ENCODE measurements at regions of chr2 and their contacts with region 1.

Region 1: DNA sequence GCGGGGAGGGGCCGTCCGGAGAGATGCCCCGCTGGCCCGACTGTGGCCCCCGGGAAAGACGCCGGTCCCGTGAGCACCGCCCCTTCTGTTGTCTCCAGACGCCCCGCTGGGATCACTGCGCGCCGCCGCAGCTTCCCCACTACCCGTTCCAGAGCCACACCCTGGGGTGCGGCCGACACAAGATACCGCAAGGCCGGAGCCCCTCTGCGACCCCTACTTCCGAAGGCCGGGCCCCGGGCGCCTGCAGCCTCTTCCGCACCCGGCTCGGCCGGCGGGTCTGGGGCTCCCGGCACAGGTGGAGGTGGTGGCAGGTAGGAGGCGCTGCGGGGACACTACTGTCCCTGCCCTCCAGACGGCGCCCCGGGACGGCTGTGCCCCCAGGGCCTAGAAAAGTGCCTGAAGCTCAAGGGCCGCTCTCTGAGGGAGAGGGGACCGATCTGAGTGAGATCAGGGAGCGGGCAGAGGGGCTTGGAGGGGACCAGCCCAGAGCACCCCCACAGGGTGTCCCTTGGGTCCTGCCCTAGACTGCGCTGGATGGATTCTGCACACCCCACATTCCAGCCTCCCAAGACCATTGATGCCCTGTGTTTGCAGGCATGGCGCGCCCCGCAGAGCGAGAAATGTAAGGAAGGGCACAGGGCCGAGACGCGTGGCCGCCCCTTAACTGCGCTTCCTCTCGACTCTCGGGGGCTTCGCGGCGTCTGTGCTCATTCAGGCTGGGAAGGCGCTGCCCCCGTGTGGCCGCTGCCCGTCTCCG is 80.0 kb downstream of the GFPT1 start:
- DNase-seq: peak; percentile 49 to 62
- ATAC-seq: peak; percentile 52 to 79
- H3K4me3 ChIP-seq: peak overlapping the region; percentile 57 to 62 (median 58)
- H3K27ac ChIP-seq: peak overlapping the region; percentile 14 to 65 (median 48)
- H3K4me1 ChIP-seq: peaks cover 12 to 23% of the 10 kb centered on the region in 2 donors
- H3K27me3 ChIP-seq: peaks cover 18 to 33% (median 25%) of the 10 kb centered on the region in 3 donors
- CTCF ChIP-seq: peak; percentile 70 to 85 (median 74)
- POLR2A ChIP-seq: no peak

Region 2: DNA sequence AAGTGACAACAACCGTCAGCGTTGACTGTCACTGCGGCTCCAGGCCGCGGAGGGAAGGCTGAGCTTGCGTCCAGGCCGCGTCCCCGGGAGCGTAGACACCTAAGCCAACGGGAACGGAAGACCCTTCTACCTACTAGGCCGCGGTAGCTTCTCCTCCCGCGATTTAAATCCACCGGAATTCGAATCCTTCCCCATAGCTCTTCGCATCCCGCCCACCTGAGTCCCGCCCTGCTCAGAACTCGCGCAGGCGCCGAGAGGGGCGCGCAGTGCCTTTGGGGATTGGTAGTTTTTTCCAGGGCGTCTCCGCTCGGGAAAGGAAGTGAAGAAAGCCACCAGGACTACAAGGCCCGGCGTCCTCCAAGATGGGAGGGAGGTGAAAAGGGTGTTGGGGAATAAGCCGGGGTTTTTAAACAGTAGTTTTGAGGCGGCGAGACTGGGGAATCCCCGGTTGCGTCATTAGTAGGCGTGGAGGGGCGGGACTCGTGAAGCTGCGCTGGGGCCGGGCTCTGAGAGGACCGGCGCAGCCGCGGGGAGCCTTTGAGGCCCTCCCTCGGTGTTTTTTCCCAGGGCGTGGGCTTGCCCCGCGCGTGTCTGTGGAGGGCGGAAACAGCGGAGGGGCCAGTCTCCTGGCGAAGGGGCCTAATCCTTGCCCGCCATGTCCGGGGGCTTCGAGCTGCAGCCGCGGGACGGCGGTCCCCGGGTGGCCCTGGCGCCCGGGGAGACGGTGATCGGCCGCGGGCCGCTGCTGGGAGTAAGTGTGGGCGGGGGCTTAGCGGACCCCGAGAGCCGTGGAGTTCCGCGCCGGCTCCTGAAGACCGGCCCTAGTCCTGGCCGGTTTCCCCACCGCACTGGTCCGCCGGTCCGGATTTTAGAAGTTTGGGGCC is 839.7 kb before region 1 on chr2 and contains the starts of genes APLF and FBXO48:
- in situ Hi-C with region 1: no loop called
- intact Hi-C with region 1: loop called (anchors 10 kb)
- DNase-seq: peak; percentile 97 to 98
- ATAC-seq: peak; percentile 99
- H3K4me3 ChIP-seq: peak within 1 kb of the TSS; percentile 75 to 93 (median 83)
- H3K27ac ChIP-seq: peak within 1 kb of the TSS; percentile 80 to 89 (median 87)
- H3K4me1 ChIP-seq: peaks cover 20 to 21% of the 10 kb centered on the region in 2 donors
- H3K27me3 ChIP-seq: no peaks in the 10 kb centered on the region
- CTCF ChIP-seq: no peak
- POLR2A ChIP-seq: peak; percentile 47 to 77
- total RNA-seq, gene APLF: 2.3 to 4.8 (median 3.5) TPM
- total RNA-seq, gene FBXO48: 1.1 to 1.9 (median 1.5) TPM

Region 3: DNA sequence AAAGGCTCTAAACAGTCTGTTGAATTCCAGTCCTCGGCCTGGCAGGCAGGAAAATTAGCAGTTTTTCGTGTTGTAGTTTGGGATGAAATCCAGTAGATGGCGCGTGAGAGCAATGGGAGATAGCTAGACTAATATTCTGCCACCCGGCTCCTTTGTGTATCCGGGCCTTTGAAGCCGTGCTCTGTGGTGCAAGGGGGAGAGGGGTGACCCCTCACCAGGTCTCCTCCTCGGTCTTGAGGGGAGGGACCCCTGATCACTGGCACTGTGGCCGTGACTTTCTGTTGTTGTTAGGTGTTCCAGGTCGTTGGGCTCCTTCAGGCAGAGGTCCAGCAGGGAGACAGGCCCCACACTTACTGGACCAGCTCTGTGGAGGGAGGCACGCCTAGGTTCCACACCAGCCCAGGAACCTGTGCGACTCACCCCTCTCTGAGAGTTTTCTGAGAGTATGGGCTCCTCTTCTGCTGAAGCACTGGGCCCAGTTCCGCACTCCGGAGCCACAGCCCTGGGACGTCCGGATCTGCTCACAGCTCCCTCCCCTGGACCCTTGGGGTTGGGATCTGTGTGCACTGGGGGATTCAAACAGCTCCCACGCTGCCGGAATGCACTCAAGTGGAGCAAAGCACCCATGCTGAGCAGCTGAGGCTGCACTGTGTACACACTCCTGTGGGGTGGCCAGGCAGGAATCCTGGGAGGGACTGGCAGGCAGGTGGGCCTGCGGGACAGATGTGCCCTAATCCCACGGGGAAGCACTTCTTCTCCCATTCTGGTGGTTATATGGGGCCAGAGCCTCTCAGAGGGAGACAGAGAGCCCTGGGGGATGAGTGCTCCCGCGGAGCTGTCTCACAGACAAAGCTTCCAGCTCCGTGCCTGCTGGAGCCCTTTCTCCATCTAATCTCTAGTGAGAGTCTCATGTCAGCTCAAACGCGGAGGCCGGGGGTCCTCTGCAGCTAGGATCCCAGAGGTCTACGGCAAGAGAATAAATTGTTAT is 363.1 kb before region 1 on chr2:
- in situ Hi-C with region 1: no loop called
- intact Hi-C with region 1: loop called (anchors 5 kb)
- DNase-seq: peak in 1 of 2 donors; percentile 32
- ATAC-seq: peak; percentile 42 to 53
- H3K4me3 ChIP-seq: no peak overlapping the region
- H3K27ac ChIP-seq: no peak overlapping the region
- H3K4me1 ChIP-seq: no peaks in the 10 kb centered on the region
- H3K27me3 ChIP-seq: peaks cover 0 to 2% (median 0%) of the 10 kb centered on the region in 3 donors
- CTCF ChIP-seq: peak; percentile 42 to 80 (median 57)
- POLR2A ChIP-seq: no peak

Region 4: GRCh38 chr2:69012310-69013141 is 294.5 kb before region 1 on chr2:
- in situ Hi-C with region 1: loop called (anchors 5 to 10 kb)
- intact Hi-C with region 1: loop called (anchors 1 kb)
- DNase-seq: peak; percentile 19 to 28
- ATAC-seq: peak; percentile 67 to 81
- H3K4me3 ChIP-seq: peak overlapping the region; percentile 67 to 80 (median 74)
- H3K27ac ChIP-seq: peak overlapping the region; percentile 42 to 72 (median 57)
- H3K4me1 ChIP-seq: peaks cover 18 to 26% of the 10 kb centered on the region in 2 donors
- H3K27me3 ChIP-seq: peaks cover 6 to 25% (median 22%) of the 10 kb centered on the region in 3 donors
- CTCF ChIP-seq: peak; percentile 47 to 76 (median 74)
- POLR2A ChIP-seq: no peak

Region 5: DNA sequence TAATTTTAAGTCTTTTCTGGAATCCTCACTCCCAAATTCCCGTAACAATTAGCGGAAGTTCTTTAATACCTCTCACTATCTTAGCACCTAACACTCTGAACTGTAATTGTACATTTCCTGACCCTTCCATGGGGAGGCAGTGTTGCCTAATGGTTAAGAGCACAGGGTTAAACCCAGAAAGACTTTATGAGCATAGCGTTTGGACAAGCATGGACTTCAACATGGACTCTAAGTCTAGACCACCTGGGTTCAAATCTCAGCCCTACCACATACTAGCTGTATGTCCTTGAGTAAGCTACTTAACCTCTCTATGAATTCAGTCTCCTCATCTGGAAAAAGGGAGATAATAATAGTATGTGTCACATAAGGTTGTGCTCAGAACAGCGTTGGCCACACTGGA is 281.0 kb before region 1 on chr2:
- in situ Hi-C with region 1: no loop called
- intact Hi-C with region 1: loop called (anchors 1 kb)
- DNase-seq: no peak
- ATAC-seq: peak in 1 of 2 donors; percentile 78
- H3K4me3 ChIP-seq: no peak overlapping the region
- H3K27ac ChIP-seq: no peak overlapping the region
- H3K4me1 ChIP-seq: peaks cover 0 to 1% of the 10 kb centered on the region in 2 donors
- H3K27me3 ChIP-seq: no peaks in the 10 kb centered on the region
- CTCF ChIP-seq: peak in 4 of 5 experiments; percentile 37 to 50 (median 42)
- POLR2A ChIP-seq: no peak

Region 6: DNA sequence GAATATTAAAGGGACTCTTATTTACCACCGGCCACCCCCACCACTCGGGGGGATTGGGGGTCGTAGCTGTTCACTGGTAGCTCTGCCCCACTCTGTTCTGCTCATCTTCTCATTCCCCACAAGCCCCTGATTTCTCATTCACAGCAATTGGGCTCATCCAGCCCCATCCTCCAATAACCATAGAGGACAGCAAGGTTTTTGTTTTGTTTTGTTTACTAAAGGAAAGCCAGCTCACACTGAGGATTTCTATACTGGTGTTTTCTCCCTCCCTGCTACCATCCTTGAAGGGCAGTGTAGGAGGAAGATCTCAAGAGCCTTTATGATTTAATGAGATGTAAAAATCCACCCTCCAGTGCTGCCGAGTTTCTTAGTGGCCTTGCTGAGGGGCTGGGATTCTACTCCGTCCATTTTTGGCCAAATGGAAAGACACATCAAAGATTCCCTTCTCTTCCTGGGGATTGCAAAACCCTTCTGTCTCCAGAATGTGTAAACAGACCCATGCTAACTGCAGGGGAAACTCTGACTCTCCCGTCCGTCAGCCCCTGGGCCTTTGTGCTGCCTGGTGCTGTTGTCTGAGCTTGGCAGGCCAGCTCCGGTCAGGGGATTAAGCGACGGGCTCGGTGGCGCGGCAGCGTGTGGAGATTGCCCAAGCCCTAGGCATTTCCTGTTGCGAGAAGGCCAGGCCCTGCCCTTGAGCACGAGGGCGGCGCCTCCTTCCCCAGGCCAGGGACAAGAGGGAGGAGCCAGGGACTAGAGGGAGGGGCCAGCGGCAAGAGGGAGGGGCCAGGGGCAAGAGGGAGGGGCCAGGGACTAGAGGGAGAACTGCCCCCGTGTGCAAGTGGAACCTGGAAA is 129.0 kb before region 1 on chr2:
- in situ Hi-C with region 1: no loop called
- intact Hi-C with region 1: loop called (anchors 10 kb)
- DNase-seq: peak; percentile 82 to 94
- ATAC-seq: peak; percentile 84 to 85
- H3K4me3 ChIP-seq: peak overlapping the region in 3 of 4 donors; percentile 1 to 10 (median 7)
- H3K27ac ChIP-seq: peak overlapping the region; percentile 70 to 81 (median 74)
- H3K4me1 ChIP-seq: peaks cover 16% of the 10 kb centered on the region in 2 donors
- H3K27me3 ChIP-seq: no peaks in the 10 kb centered on the region
- CTCF ChIP-seq: no peak
- POLR2A ChIP-seq: peak; percentile 35 to 57

Measured in gastrocnemius medialis (tissue), 4 donors.